H1 (cell line): ENCODE measurements at regions of chr9 and their contacts with region 1.

Region 1: GRCh38 chr9:132412089-132412488 is 2.1 kb downstream of the CFAP77 start:
- DNase-seq: peak in 1 of 2 experiments; percentile 69
- H3K4me3 ChIP-seq: no peak overlapping the region
- H3K27ac ChIP-seq: no peak overlapping the region
- H3K4me1 ChIP-seq: peaks cover 6 to 15% (median 6%) of the 10 kb centered on the region in 4 experiments; a peak in 6 of 7 replicates
- H3K27me3 ChIP-seq: peaks cover 1 to 20% (median 13%) of the 10 kb centered on the region in 4 experiments; a peak in 6 of 7 replicates
- CTCF ChIP-seq: peak; percentile 66 to 83 (median 81)
- EP300 ChIP-seq: no peak
- POLR2A ChIP-seq: no peak
- RAD21 ChIP-seq: peak; percentile 83 to 87

Region 2: GRCh38 chr9:132457504-132458236 is 45.6 kb after region 1 on chr9:
- CTCF ChIA-PET with region 1: interaction called, 17 read pairs
- POLR2A ChIA-PET with region 1: interaction called, 3 read pairs
- DNase-seq: no peak
- H3K4me3 ChIP-seq: no peak overlapping the region
- H3K27ac ChIP-seq: no peak overlapping the region
- H3K4me1 ChIP-seq: no peaks in the 10 kb centered on the region; a peak in 2 of 7 replicates
- H3K27me3 ChIP-seq: no peaks in the 10 kb centered on the region
- CTCF ChIP-seq: no peak
- EP300 ChIP-seq: no peak
- POLR2A ChIP-seq: no peak
- RAD21 ChIP-seq: no peak

Region 3: DNA sequence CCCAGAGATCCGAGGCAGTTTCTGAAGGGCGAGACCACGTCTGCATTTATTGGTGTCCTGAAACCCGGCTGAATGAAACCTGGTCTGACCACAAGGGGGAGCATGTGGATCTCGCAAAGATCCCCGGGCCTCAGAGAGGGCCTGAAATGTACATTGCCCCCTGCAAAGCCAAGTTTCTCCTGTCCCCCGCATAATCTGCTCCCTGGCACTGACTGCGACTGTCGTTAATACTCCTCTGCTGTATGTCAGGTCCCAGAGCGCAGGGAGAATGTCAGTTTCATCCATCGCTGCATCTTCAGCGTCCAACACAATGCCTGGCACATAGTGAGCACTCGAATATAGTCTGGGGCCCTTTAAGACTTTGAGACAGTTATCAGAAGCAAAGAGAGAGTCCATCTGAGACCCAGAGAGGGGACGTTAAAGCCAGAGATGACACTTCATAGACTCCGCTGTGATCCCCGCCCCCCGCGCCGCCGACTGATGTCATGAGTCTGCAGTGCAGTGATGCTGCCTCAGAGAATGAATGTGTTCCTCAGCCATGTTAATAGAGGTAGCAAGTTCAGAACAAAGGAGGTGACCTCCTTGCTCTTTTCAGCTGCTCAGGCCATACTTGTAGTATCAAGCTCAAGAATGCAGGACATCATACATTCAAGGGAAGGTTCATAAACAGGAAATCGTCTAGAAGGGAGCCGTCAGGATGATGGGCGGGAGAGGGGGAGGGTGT is 95.8 kb after region 1 on chr9:
- CTCF ChIA-PET with region 1: interaction called, 71 read pairs
- POLR2A ChIA-PET with region 1: interaction called, 3 read pairs
- DNase-seq: peak; percentile 43 to 87
- H3K4me3 ChIP-seq: no peak overlapping the region
- H3K27ac ChIP-seq: no peak overlapping the region
- H3K4me1 ChIP-seq: peaks cover 0 to 9% (median 6%) of the 10 kb centered on the region in 4 experiments; a peak in 4 of 7 replicates
- H3K27me3 ChIP-seq: no peaks in the 10 kb centered on the region
- CTCF ChIP-seq: peak; percentile 80 to 89 (median 87)
- EP300 ChIP-seq: no peak
- POLR2A ChIP-seq: no peak
- RAD21 ChIP-seq: peak; percentile 91 to 92

Region 4: DNA sequence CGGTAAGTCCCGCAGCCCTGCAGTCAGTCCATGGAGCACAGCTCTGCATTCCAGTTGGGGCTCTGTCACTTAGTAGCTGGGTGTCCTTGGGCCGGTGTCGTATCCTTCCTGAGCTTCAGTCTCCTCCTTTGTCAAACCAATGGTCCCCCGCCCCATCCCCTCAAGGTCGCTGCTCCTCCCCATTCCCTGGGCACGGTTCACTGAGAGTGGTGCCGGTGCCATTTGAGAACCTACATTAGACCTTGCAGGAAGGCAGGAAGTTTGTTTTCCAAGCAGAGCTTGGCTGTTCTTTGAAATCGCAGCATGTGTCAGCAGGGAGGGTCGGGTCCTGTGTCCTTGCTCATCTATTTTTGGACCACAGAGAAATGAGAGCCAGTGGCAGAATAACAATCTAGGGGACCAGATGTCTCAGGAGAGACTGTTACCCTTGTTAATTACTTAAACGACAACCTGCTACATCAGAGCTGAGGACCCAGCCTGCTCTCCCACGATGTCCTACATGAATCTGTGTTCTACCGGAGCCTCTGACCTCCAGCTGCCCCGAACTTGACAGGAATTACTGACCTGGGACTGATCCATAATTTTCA is 148.6 kb after region 1 on chr9:
- CTCF ChIA-PET with region 1: interaction called, 15 read pairs
- POLR2A ChIA-PET with region 1: no interaction called
- DNase-seq: no peak
- H3K4me3 ChIP-seq: no peak overlapping the region
- H3K27ac ChIP-seq: no peak overlapping the region
- H3K4me1 ChIP-seq: peaks cover 0 to 3% (median 0%) of the 10 kb centered on the region in 4 experiments; a peak in 1 of 7 replicates
- H3K27me3 ChIP-seq: no peaks in the 10 kb centered on the region
- CTCF ChIP-seq: no peak
- EP300 ChIP-seq: no peak
- POLR2A ChIP-seq: no peak
- RAD21 ChIP-seq: no peak